ENCODE measurements at regions of chr3 and their contacts with region 1.

Region 1: DNA sequence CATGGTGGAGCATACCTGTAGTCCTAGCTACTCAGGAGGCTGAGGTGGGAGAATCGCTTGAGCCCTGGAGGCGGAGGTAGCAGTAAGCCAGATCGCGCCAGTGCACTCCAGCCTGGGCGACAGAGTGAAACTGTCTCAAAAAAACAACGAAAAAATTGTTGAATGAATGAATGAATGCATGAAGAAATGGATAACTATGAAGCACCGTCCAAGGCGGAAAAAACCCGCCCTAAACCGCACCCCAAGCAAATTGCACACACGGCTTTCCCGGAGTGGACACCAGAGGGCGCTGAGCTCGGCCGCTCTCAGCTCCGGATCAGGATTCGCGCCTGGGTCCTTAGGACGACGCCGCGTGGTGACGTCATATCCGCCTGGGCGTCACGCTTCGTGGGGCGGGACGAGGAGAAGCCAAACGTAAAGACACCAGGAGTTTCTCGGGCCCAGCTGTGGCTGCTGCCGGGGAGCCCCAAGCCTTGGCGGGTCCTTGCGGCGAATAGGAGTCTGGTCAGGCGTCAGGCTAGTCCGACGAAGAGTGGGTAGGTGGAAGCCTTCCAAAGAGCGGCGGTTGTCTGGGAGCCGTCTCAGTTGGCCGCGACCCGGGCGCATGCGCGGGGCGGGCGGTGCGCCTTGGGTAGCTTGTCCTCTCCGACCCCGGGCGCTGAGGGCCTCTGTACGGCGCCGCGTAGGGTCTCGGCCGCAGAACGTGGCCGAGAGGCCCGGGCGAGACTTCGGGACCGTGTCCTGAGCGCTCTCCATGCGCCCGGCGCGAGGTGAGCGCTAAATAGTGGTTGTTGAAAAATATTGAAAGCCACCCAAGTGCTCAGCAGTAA is at the starts of genes HTD2 and RPP14:
- DNase-seq: peak; percentile 98
- ATAC-seq: peak; percentile 88
- H3K4me3 Mint-ChIP-seq: peak within 1 kb of the TSS; percentile 90
- H3K27ac Mint-ChIP-seq: peak within 1 kb of the TSS; percentile 100
- H3K4me1 Mint-ChIP-seq: peaks cover 29% of the 10 kb centered on the region
- H3K27me3 Mint-ChIP-seq: peaks cover 8% of the 10 kb centered on the region
- total RNA-seq, gene HTD2: 7.6 to 8.1 TPM
- total RNA-seq, gene RPP14: 12.8 to 15.1 TPM

Region 2: GRCh38 chr3:58008140-58009025 is 297.7 kb before region 1 on chr3 and contains the start of gene FLNB:
- CTCF ChIA-PET with region 1: interaction called, 11 read pairs
- POLR2A ChIA-PET with region 1: no interaction called
- DNase-seq: peak; percentile 81
- ATAC-seq: peak; percentile 86
- H3K4me3 Mint-ChIP-seq: peak within 1 kb of the TSS; percentile 89
- H3K27ac Mint-ChIP-seq: peak within 1 kb of the TSS; percentile 87
- H3K4me1 Mint-ChIP-seq: peaks cover 36% of the 10 kb centered on the region
- H3K27me3 Mint-ChIP-seq: no peaks in the 10 kb centered on the region
- total RNA-seq, gene FLNB: 14.1 to 15.9 TPM

Region 3: DNA sequence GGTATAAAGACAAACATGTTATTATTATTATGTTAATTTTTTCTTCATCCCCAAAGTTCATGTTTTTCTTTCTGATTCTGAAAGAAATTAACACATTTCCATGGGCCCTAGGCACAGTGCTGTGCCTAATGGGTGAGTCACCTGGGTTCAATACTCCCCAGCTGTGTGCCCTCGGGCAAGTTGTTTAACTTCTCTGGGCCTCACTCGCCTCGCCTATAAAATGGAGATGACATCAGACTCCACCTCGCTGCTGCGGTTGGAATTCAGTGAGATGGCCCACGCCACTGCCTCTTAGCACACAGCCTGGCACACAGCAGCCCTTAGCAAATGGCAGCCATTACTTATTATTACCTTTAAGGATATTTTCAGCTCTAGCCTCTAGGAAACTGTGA is 117.9 kb before region 1 on chr3:
- CTCF ChIA-PET with region 1: interaction called, 55 read pairs
- POLR2A ChIA-PET with region 1: interaction called, 3 read pairs
- DNase-seq: no peak
- ATAC-seq: no peak
- H3K4me3 Mint-ChIP-seq: no peak overlapping the region
- H3K27ac Mint-ChIP-seq: no peak overlapping the region
- H3K4me1 Mint-ChIP-seq: peaks cover 2% of the 10 kb centered on the region
- H3K27me3 Mint-ChIP-seq: no peaks in the 10 kb centered on the region

Region 4: GRCh38 chr3:58237238-58237940 is 68.7 kb before region 1 on chr3 and contains the start of gene ABHD6:
- CTCF ChIA-PET with region 1: interaction called, 26 read pairs
- POLR2A ChIA-PET with region 1: interaction called, 5 read pairs
- DNase-seq: peak; percentile 82
- ATAC-seq: peak; percentile 87
- H3K4me3 Mint-ChIP-seq: peak within 1 kb of the TSS; percentile 82
- H3K27ac Mint-ChIP-seq: peak within 1 kb of the TSS; percentile 77
- H3K4me1 Mint-ChIP-seq: peaks cover 14% of the 10 kb centered on the region
- H3K27me3 Mint-ChIP-seq: peaks cover 22% of the 10 kb centered on the region
- total RNA-seq, gene ABHD6: 4.0 to 4.4 TPM

Region 5: DNA sequence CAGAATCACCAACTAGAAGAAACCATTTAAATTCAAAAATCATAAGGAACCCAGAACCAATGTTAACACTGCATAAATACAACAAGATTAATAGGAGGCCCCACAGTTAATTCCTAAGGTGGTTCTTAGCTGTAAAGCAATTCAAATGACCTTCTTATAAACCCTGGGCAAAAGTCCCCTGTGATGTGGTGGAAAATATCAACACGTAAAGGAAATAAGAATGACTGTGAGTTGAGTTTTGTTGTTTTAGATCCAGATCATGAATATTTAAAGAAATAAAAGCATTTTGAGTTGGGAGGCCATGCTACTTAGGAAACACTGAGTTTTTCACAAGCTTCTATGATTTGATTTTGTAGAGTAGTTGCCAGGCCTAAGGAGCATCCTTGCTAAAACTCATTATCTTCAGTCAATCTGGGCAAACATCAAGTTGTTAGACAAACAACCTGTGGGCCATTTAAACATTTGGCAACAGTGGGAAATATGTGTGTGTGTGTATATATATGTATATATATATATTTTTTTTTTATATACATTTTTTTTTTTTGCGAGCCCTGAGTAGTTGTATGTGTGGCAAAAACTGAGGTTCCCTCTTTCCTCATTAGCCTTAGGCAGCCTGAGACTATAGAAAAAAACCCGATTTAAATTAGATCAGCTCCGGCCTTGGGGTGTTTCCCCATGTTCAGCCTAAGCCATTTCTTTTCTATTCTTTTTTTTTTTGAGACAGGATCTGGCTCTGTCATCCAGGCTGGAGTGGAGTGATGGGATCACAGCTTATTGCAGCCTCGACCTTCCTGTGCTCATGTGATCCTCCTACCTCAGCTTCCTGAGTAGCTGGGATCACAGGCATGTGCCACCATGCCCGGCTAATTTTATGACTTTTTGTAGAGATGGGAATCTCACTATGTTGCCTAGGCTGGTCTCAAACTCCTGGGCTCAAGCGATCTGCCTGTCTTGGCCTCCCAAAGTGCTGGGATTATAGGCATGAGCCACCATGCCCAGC is 18.6 kb after region 1 on chr3:
- CTCF ChIA-PET with region 1: interaction called, 127 read pairs
- POLR2A ChIA-PET with region 1: interaction called, 3 read pairs
- DNase-seq: no peak
- ATAC-seq: peak; percentile 43
- H3K4me3 Mint-ChIP-seq: no peak overlapping the region
- H3K27ac Mint-ChIP-seq: peak overlapping the region; percentile 61
- H3K4me1 Mint-ChIP-seq: peaks cover 19% of the 10 kb centered on the region
- H3K27me3 Mint-ChIP-seq: no peaks in the 10 kb centered on the region

Region 6: GRCh38 chr3:58349792-58350626 is 43.9 kb after region 1 on chr3:
- CTCF ChIA-PET with region 1: interaction called, 30 read pairs
- POLR2A ChIA-PET with region 1: interaction called, 11 read pairs
- DNase-seq: peak; percentile 45
- ATAC-seq: no peak
- H3K4me3 Mint-ChIP-seq: peak overlapping the region; percentile 10
- H3K27ac Mint-ChIP-seq: peak overlapping the region; percentile 83
- H3K4me1 Mint-ChIP-seq: peaks cover 81% of the 10 kb centered on the region
- H3K27me3 Mint-ChIP-seq: no peaks in the 10 kb centered on the region

Region 7: GRCh38 chr3:58491506-58492402 is 185.7 kb after region 1 on chr3 and contains the start of gene KCTD6:
- CTCF ChIA-PET with region 1: interaction called, 53 read pairs
- POLR2A ChIA-PET with region 1: no interaction called
- DNase-seq: peak; percentile 87
- ATAC-seq: peak; percentile 95
- H3K4me3 Mint-ChIP-seq: peak within 1 kb of the TSS; percentile 86
- H3K27ac Mint-ChIP-seq: peak within 1 kb of the TSS; percentile 76
- H3K4me1 Mint-ChIP-seq: peaks cover 17% of the 10 kb centered on the region
- H3K27me3 Mint-ChIP-seq: peaks cover 35% of the 10 kb centered on the region
- total RNA-seq, gene KCTD6: 5.2 to 6.2 TPM

Measured in activated CD8-positive, alpha-beta T cell treated with anti-CD3 and anti-CD28 coated beads, Interleukin-2, amount 10 ng/mL, durations not matched to agents 7 days and 5 days (primary cell).